ENCODE measurements at regions of chr12 and their contacts with region 1.

Region 1: GRCh38 chr12:20463913-20464524 is 95.7 kb downstream of the PDE3A start:
- DNase-seq: no peak
- H3K4me3 ChIP-seq: no peak overlapping the region
- H3K27ac ChIP-seq: peak overlapping the region in 3 of 4 donors; percentile 18 to 76 (median 70)
- H3K4me1 ChIP-seq: peaks cover 29 to 52% (median 38%) of the 10 kb centered on the region in 4 donors
- H3K27me3 ChIP-seq: no peaks in the 10 kb centered on the region
- CTCF ChIP-seq: peak; percentile 62 to 73 (median 66)
- EP300 ChIP-seq: no peak
- POLR2A ChIP-seq: no peak

Region 2: DNA sequence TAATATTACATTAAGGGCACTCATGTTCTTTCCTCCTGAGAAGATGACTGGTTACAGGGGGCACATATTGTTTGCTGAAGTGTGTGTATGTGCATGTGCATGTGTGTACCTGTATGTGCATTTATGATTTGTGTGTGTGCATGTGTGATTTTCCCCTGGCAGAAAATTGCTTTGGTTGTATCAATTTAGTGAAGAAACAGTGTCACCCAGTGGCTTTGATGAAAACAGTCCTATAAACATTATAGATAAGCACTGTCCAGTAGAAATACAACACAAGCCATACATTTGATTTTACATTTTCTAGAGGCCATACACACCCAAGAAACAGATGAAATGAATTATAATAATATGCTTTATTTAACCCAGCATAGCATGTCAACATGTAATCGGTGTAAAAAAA is 87.0 kb before region 1 on chr12:
- intact Hi-C with region 1: loop called (anchors 5 kb)
- DNase-seq: no peak
- H3K4me3 ChIP-seq: no peak overlapping the region
- H3K27ac ChIP-seq: no peak overlapping the region
- H3K4me1 ChIP-seq: peaks cover 6 to 86% (median 78%) of the 10 kb centered on the region in 4 donors
- H3K27me3 ChIP-seq: no peaks in the 10 kb centered on the region
- CTCF ChIP-seq: peak; percentile 23 to 31 (median 29)
- EP300 ChIP-seq: no peak
- POLR2A ChIP-seq: no peak

Region 3: DNA sequence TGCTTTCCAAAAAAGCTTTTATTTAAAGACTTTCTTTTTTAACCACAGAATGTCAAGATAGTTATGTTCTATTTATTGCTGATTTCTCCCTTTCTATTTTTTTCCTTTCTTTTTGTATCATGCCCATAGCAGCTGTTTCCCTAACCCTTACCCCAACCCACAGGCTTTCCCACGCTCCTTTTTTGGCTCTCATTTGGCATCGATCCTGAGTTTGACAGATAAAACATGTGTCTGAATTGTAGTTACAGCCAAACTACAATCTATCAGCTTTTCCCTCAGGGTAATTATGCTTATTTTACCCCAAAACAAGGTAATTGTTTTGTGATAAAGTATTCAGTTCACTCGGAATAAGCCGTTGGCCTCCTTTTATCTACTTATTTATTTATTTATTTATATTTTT is 49.0 kb before region 1 on chr12:
- intact Hi-C with region 1: no loop called
- DNase-seq: no peak
- H3K4me3 ChIP-seq: no peak overlapping the region
- H3K27ac ChIP-seq: no peak overlapping the region
- H3K4me1 ChIP-seq: peaks cover 31 to 49% (median 38%) of the 10 kb centered on the region in 4 donors
- H3K27me3 ChIP-seq: no peaks in the 10 kb centered on the region
- CTCF ChIP-seq: no peak
- EP300 ChIP-seq: no peak
- POLR2A ChIP-seq: no peak

Region 4: DNA sequence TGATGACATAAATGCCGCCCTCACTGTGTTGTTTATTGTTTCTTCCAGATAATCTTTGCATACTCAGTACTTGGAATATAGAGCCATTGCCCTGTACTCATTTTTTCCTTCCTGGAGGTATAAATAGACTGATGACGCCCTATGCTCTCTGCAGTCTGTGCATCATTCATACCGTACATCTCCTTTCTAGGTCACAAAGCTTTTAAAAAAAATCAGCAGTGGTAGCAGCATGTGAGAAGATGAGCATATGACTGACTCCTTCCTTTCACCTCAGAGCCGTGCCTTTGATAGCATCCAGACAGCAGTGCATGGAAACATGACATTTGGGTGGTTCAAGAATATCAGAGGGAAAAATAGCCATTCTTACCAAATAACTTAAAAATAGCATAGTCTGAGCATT is 18.3 kb before region 1 on chr12:
- intact Hi-C with region 1: no loop called
- DNase-seq: no peak
- H3K4me3 ChIP-seq: no peak overlapping the region
- H3K27ac ChIP-seq: peak overlapping the region; percentile 3 to 39 (median 16)
- H3K4me1 ChIP-seq: peaks cover 33 to 70% (median 57%) of the 10 kb centered on the region in 4 donors
- H3K27me3 ChIP-seq: no peaks in the 10 kb centered on the region
- CTCF ChIP-seq: no peak
- EP300 ChIP-seq: no peak
- POLR2A ChIP-seq: no peak

Region 5: GRCh38 chr12:20549107-20549719 is 85.2 kb after region 1 on chr12:
- intact Hi-C with region 1: loop called (anchors 10 kb)
- DNase-seq: no peak
- H3K4me3 ChIP-seq: no peak overlapping the region
- H3K27ac ChIP-seq: peak overlapping the region; percentile 50 to 74 (median 62)
- H3K4me1 ChIP-seq: peaks cover 27 to 50% (median 47%) of the 10 kb centered on the region in 4 donors
- H3K27me3 ChIP-seq: no peaks in the 10 kb centered on the region
- CTCF ChIP-seq: peak; percentile 52 to 64 (median 62)
- EP300 ChIP-seq: no peak
- POLR2A ChIP-seq: no peak

Region 6: GRCh38 chr12:20601668-20602280 is 137.8 kb after region 1 on chr12:
- intact Hi-C with region 1: loop called (anchors 5 kb)
- DNase-seq: no peak
- H3K4me3 ChIP-seq: no peak overlapping the region
- H3K27ac ChIP-seq: peak overlapping the region; percentile 49 to 70 (median 68)
- H3K4me1 ChIP-seq: peaks cover 20 to 69% (median 45%) of the 10 kb centered on the region in 4 donors
- H3K27me3 ChIP-seq: no peaks in the 10 kb centered on the region
- CTCF ChIP-seq: peak; percentile 55 to 62 (median 62)
- EP300 ChIP-seq: no peak
- POLR2A ChIP-seq: no peak